ENCODE measurements at regions of chr1 and their contacts with region 1.

Region 1: DNA sequence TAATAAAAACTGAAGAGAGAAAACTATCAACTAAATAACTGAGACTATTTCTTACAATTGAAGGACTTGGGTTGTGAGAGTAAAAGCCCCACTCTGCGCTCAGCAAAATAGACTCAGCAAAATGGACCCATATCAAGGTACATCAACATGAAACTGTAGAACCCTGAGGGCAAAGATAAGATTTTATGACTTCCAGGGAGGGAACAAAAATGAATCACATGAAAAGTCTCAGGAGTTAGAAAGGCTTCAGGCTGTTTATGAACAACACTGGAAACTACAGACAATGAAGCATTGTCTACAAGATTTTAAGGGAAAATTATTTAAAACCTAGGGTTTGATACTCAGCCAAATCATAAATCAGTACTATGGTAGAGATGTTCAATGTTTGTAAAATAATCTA is 434.3 kb downstream of the PTPRC start:
- DNase-seq: no peak
- H3K4me3 ChIP-seq: no peak overlapping the region
- H3K27ac ChIP-seq: no peak overlapping the region
- H3K4me1 ChIP-seq: peaks cover 5% of the 10 kb centered on the region
- CTCF ChIP-seq: no peak

Region 2: GRCh38 chr1:199084293-199084692 is 11.1 kb after region 1 on chr1:
- CTCF ChIA-PET with region 1: no interaction called
- POLR2A ChIA-PET with region 1: interaction called, 23 read pairs
- intact Hi-C with region 1: no loop called
- DNase-seq: no peak
- H3K4me3 ChIP-seq: no peak overlapping the region
- H3K27ac ChIP-seq: no peak overlapping the region
- H3K4me1 ChIP-seq: peaks cover 21% of the 10 kb centered on the region
- CTCF ChIP-seq: no peak

Region 3: DNA sequence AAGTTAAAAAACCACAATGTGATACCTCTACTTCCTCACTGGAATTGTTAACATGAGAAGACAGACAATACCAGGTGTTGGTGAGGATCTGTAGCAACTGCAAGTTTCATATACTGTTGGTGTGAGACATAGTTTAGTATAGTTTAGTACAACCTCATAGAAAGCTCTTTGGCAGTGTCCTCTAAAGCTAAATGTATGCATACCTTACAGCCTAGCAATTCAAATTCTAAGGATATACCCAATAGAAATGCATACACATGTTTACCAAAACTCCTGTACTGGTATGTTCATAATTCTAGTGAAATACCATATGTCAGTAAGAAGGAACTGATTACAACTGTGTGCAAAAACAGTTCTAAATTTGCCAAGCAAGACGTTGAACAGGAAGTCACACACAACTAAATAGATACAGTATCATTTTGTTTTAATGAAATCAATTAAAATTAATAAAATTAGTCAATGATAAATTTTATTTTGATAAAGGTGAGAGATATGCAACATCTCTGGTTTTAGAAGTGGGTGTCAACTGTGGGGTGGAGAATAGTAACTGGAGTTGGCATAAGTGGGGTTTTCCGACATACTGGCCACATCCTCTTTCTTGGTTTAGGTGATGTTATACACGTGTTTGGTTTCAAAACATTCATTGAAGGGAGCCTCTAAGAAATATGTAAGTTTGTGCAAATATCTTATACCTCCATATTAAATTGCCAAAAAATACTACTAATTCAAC is 16.4 kb after region 1 on chr1:
- CTCF ChIA-PET with region 1: no interaction called
- POLR2A ChIA-PET with region 1: interaction called, 23 read pairs
- intact Hi-C with region 1: loop called (anchors 2 kb)
- DNase-seq: peak; percentile 76
- H3K4me3 ChIP-seq: peak overlapping the region; percentile 24
- H3K27ac ChIP-seq: peak overlapping the region; percentile 71
- H3K4me1 ChIP-seq: peaks cover 33% of the 10 kb centered on the region
- CTCF ChIP-seq: no peak

Region 4: DNA sequence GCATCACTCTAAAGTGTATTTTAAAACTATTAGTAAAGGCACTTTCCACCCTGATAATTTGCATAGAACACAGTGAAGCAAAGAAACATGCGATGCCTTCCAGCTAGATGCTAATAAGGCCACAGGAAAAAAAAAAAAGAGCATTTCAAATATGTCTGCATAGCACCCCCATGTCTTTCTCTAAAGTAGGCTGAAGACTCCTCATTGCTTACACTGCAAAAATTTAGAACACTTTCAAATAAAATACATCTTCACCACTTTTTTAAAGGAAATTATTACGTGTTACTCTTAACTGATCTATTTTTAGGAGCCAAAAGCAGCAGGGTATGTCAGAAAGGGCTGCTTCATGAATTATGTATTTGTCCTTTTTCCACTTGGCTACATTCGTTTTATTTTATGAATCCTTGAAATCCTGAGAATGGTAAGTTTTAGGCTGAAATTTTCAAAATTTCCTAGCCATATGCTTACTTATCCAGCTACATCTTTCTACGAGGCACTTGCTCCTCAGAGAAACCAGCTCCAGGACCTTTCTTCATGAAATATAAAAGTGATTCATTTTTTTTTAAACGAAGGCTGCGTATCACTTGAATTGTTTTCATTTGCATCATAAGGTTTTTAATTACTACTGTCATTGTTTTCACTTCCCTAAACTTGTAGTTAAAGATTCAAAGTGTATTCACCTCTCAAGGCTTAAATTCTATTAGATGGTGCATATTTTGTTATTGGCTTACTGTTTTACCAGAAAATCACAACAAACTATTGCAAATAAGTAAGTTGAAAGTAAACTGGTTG is 78.7 kb after region 1 on chr1:
- CTCF ChIA-PET with region 1: no interaction called
- POLR2A ChIA-PET with region 1: no interaction called
- intact Hi-C with region 1: no loop called
- DNase-seq: no peak
- H3K4me3 ChIP-seq: no peak overlapping the region
- H3K27ac ChIP-seq: no peak overlapping the region
- H3K4me1 ChIP-seq: peaks cover 7% of the 10 kb centered on the region
- CTCF ChIP-seq: no peak